ENCODE measurements at regions of chr7 and their contacts with region 1.

Region 1: DNA sequence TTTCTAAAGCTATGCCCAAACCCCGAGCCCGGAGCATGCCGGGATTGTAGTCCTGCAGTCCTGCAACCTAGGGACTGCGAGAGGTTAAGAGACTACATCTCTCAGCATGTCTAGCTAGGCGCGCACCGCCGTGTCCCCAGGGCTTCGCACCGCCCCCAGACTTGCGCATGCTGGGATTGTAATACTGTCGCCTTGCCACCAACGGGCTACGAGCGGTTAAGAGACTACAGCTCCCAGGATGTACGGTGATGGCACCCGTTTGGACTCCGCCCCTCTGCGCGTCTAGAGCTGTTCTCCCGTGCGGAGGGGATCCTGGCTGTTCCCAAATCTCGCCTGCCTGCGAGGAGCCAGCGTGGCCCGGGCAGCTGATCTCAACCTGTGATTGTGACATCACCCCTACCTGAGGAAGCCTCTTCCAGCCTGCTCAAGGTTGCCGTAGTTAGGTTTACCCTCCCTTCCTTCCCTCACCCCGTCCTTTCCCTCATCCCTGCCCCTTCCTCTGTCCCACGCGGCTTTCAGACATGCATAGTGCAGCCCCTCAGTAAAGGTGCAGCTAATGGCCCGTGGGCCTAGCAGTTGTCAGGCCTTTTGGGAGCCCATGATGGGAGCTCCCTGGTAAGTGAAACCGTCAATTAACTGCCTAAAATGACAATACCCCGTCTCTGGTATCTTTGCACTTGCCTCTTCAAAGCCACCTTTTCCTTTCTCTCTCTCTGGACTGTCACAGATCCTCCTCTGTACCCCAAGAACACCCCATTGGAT is 6.3 kb upstream of the ZNF736 start:
- DNase-seq: peak; percentile 80 to 96 (median 93)
- ATAC-seq: peak; percentile 98
- H3K4me3 Mint-ChIP-seq: peak overlapping the region; percentile 91 to 99 (median 96)
- H3K27ac Mint-ChIP-seq: peak overlapping the region; percentile 95 to 99 (median 98)
- H3K4me1 Mint-ChIP-seq: peaks cover 8 to 42% (median 23%) of the 10 kb centered on the region in 4 donors
- H3K27me3 Mint-ChIP-seq: no peaks in the 10 kb centered on the region

Region 2: GRCh38 chr7:64294701-64295420 is 12.6 kb before region 1 on chr7:
- POLR2A ChIA-PET with region 1: no interaction called
- DNase-seq: no peak
- ATAC-seq: no peak
- H3K4me3 Mint-ChIP-seq: no peak overlapping the region
- H3K27ac Mint-ChIP-seq: no peak overlapping the region
- H3K4me1 Mint-ChIP-seq: no peaks in the 10 kb centered on the region
- H3K27me3 Mint-ChIP-seq: no peaks in the 10 kb centered on the region

Region 3: DNA sequence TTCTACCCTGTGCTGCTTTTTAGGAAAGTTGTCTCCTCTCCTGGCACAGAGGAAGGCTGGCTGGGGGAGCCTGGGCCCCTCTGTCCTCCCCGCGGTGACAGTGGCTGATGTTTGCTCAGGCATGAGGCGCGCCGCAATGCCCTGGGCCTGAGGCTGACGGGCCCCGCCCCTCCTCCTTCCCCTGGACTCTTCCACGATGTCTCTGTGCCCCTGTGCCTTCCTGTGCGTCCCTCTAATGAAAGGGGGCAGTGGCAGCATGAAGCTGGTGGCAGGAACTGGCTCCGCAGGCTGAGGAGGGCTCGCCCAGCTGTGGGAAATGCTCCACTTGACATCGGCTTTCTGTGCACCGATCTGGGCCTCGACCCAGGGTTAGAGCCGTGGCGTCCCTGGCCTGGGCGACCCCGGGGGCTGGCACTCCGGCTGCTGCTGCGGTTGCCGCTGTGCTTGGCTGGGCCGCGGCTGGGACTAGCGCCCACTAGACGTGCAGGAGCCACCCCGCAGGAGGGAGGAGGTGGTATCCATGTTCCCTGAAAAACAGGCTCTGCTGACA is 187.6 kb after region 1 on chr7:
- POLR2A ChIA-PET with region 1: no interaction called
- DNase-seq: peak in 1 of 10 donors; percentile 57
- ATAC-seq: no peak
- H3K4me3 Mint-ChIP-seq: no peak overlapping the region
- H3K27ac Mint-ChIP-seq: no peak overlapping the region
- H3K4me1 Mint-ChIP-seq: no peaks in the 10 kb centered on the region
- H3K27me3 Mint-ChIP-seq: no peaks in the 10 kb centered on the region

Region 4: GRCh38 chr7:64665980-64666662 is 358.7 kb after region 1 on chr7 and contains the start of gene ZNF107:
- POLR2A ChIA-PET with region 1: interaction called, 14 read pairs
- DNase-seq: peak; percentile 58 to 94 (median 83)
- ATAC-seq: peak; percentile 95 to 97
- H3K4me3 Mint-ChIP-seq: peak within 1 kb of the TSS; percentile 94 to 99 (median 96)
- H3K27ac Mint-ChIP-seq: peak within 1 kb of the TSS; percentile 96 to 99 (median 98)
- H3K4me1 Mint-ChIP-seq: peaks cover 28 to 66% (median 54%) of the 10 kb centered on the region in 4 donors
- H3K27me3 Mint-ChIP-seq: no peaks in the 10 kb centered on the region
- polyA plus RNA-seq, gene ZNF107: 9.7 to 12.8 (median 11.7) TPM

Measured in naive thymus-derived CD8-positive, alpha-beta T cell (primary cell).